ENCODE measurements at regions of chr11 and their contacts with region 1.

Region 1: DNA sequence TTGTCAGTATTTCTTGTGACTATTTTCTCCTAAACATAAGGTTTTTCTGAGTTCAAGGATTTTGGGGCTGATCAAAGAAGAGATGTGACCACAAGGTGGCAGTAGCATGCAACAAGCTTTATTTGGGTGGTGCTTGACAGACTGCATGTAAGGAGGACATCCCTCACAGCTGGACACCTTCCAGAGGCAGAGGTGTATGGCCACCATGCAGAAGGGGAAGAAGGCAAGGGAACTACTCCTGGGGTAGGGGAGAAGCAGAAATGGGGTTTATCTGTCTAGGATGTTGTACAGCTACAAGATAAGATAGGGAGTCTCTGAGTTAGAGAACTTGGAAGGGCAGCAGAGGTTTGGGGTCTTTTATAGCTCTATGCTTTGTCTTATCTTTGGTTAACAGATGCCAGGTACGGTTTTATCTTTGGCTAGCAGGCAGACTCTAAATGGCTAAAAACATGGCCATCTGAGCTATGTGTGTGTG is 5.1 kb upstream of the BIRC2 start:
- DNase-seq: no peak
- H3K4me3 ChIP-seq: no peak overlapping the region
- H3K27ac ChIP-seq: no peak overlapping the region
- H3K4me1 ChIP-seq: peaks cover 9% of the 10 kb centered on the region
- H3K27me3 ChIP-seq: no peaks in the 10 kb centered on the region
- CTCF ChIP-seq: peak in 1 of 3 experiments; percentile 75
- POLR2A ChIP-seq: no peak

Region 2: DNA sequence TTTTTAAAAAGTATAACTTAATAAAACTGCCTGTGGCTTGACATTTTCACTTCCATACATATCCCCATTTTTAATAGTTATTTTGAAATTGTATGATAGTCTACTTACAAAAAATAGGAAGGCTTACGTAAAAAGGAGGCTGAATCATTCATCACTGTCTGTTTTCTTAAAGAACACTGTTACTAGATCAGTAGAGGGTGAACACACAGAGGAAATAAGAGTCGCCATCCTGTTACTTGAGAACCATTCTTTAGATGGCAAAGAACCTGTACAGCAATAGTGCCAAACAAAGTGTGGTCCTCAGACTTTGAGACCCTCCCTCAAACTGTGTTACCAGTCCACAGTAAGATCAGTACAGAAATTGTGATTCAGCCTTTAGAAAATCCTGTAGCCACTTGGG is 1392.9 kb before region 1 on chr11:
- intact Hi-C with region 1: no loop called
- DNase-seq: no peak
- H3K4me3 ChIP-seq: no peak overlapping the region
- H3K27ac ChIP-seq: no peak overlapping the region
- H3K4me1 ChIP-seq: no peaks in the 10 kb centered on the region
- H3K27me3 ChIP-seq: no peaks in the 10 kb centered on the region
- CTCF ChIP-seq: no peak
- POLR2A ChIP-seq: no peak

Region 3: GRCh38 chr11:102495161-102496042 is 153.5 kb after region 1 on chr11:
- intact Hi-C with region 1: loop called (anchors 5 kb)
- DNase-seq: no peak
- H3K4me3 ChIP-seq: no peak overlapping the region
- H3K27ac ChIP-seq: no peak overlapping the region
- H3K4me1 ChIP-seq: no peaks in the 10 kb centered on the region
- H3K27me3 ChIP-seq: no peaks in the 10 kb centered on the region
- CTCF ChIP-seq: peak; percentile 63 to 74 (median 73)
- POLR2A ChIP-seq: no peak

Measured in vagina (tissue), 2 donors.